K562 (cell line): ENCODE measurements at regions of chr15 and their contacts with region 1.

Region 1: DNA sequence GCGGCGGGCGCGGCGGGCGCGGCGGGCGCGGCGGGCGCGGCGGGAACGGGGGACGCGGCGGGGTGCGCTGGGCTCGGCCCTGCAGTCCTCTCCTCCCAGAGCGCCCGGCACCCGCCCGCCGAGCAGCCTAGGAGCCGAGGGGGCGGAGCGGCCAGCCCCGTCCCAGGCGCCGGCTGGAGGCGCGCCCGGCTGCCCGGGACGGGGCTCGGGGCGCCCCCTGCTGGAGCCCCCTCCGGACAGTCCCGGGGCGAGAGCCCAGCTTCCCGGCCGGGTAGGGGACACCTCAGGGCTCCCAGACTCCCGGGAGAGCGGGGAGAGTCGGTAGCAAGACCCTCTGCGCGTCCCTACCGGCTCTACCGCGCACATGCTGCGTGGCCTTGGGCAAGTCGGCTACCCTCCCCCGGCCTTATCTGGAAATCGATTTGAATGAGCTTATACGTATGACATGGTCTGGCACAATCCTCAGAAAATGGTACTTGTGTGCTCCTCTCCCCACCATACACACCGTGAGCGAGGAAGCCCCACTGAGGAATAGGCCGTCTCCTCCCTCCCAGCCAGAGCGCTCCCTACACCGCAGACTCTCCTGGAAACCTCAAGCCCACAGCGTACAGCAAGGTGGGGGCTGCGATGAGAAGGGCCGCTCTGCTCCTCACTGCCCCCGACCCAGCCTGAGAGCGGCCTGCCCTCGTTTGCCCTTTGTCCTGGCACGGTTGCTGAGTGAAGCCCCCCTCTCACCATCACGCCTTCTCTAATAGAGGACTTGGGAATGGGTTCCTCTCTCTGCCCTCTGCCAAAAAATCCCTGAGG is at the start of gene DAPK2:
- DNase-seq: peak; percentile 80 to 96 (median 95)
- ATAC-seq: peak; percentile 98
- H3K4me3 ChIP-seq: peak within 1 kb of the TSS; percentile 43
- H3K27ac ChIP-seq: peak within 1 kb of the TSS; percentile 51; the same call in 1 of the 3 replicates
- H3K4me1 ChIP-seq: peaks cover 4 to 28% of the 10 kb centered on the region in 2 experiments; a peak in 3 of 5 replicates
- H3K27me3 ChIP-seq: no peaks in the 10 kb centered on the region
- CTCF ChIP-seq: peak; percentile 76 to 91 (median 84)
- EP300 ChIP-seq: no peak
- POLR2A ChIP-seq: no peak
- RAD21 ChIP-seq: peak; percentile 89 to 90
- polyA plus RNA-seq, gene DAPK2: 0.14 to 0.20 TPM

Region 2: DNA sequence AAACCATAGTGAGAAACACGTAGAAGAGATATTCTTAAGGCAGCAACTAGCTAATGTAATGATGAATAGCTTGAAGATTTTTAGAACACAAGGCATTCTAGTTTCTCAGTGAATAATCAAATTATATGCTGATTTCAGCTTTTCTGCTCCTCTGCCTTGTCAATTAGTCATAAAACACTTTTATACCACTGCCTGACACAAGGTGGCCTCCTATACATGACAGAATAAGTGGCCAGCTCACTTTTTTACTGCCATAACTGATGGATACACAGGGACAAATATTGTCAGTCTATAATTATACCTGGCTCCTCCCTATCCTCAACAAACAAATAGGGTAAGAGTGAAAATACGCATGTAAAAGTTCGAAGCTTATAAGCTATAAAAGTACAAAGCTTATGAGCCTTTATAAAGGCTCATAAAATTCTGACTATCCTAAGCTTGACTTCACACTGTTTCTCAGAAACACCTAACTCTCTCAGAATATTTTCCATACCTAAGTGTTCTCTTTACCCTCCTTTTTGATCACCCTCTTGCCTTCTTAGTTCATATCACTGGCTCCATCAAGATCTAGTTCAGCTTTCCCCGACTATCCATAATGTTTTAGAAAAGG is 294.4 kb before region 1 on chr15:
- CTCF ChIA-PET with region 1: interaction called, 9 read pairs
- POLR2A ChIA-PET with region 1: no interaction called
- in situ Hi-C with region 1: loop called (anchors 5 kb)
- intact Hi-C with region 1: loop called (anchors 5 kb)
- DNase-seq: peak; percentile 33 to 72 (median 45)
- ATAC-seq: peak; percentile 92
- H3K4me3 ChIP-seq: no peak overlapping the region
- H3K27ac ChIP-seq: no peak overlapping the region
- H3K4me1 ChIP-seq: no peaks in the 10 kb centered on the region
- H3K27me3 ChIP-seq: no peaks in the 10 kb centered on the region
- CTCF ChIP-seq: peak; percentile 67 to 80 (median 72)
- EP300 ChIP-seq: no peak
- POLR2A ChIP-seq: no peak
- RAD21 ChIP-seq: peak; percentile 77 to 90

Region 3: GRCh38 chr15:63826528-63826927 is 220.0 kb before region 1 on chr15:
- CTCF ChIA-PET with region 1: interaction called, 5 read pairs
- POLR2A ChIA-PET with region 1: no interaction called
- in situ Hi-C with region 1: loop called (anchors 5 kb)
- intact Hi-C with region 1: loop called (anchors 2 kb)
- DNase-seq: peak in 1 of 4 experiments; percentile 66
- ATAC-seq: peak; percentile 51; the same call in 1 of the 3 replicates
- H3K4me3 ChIP-seq: no peak overlapping the region
- H3K27ac ChIP-seq: peak overlapping the region; percentile 53; the same call in 1 of the 3 replicates
- H3K4me1 ChIP-seq: peaks cover 16 to 23% of the 10 kb centered on the region in 2 experiments
- H3K27me3 ChIP-seq: no peaks in the 10 kb centered on the region
- CTCF ChIP-seq: peak; percentile 17 to 53 (median 25); a peak in 3 of 6 replicates
- EP300 ChIP-seq: no peak
- POLR2A ChIP-seq: no peak
- RAD21 ChIP-seq: peak; percentile 41 to 47

Region 4: GRCh38 chr15:63945007-63945788 is 101.4 kb before region 1 on chr15:
- CTCF ChIA-PET with region 1: interaction called, 6 read pairs
- POLR2A ChIA-PET with region 1: interaction called, 3 read pairs
- in situ Hi-C with region 1: loop called (anchors 5 kb)
- intact Hi-C with region 1: loop called (anchors 1 kb)
- DNase-seq: peak; percentile 82 to 87 (median 84)
- ATAC-seq: peak; percentile 97
- H3K4me3 ChIP-seq: no peak overlapping the region
- H3K27ac ChIP-seq: no peak overlapping the region
- H3K4me1 ChIP-seq: peaks cover 4 to 8% of the 10 kb centered on the region in 2 experiments; a peak in 3 of 5 replicates
- H3K27me3 ChIP-seq: no peaks in the 10 kb centered on the region
- CTCF ChIP-seq: peak; percentile 86 to 96 (median 94)
- EP300 ChIP-seq: 0 out of 2 replicates have a peak, but pooled peaks have one; percentile 12
- POLR2A ChIP-seq: no peak
- RAD21 ChIP-seq: peak; percentile 62 to 64

Region 5: GRCh38 chr15:63978511-63979261 is 67.9 kb before region 1 on chr15:
- CTCF ChIA-PET with region 1: no interaction called
- POLR2A ChIA-PET with region 1: no interaction called
- in situ Hi-C with region 1: no loop called
- intact Hi-C with region 1: no loop called
- DNase-seq: no peak
- ATAC-seq: no peak
- H3K4me3 ChIP-seq: no peak overlapping the region
- H3K27ac ChIP-seq: no peak overlapping the region
- H3K4me1 ChIP-seq: peaks cover 0 to 8% of the 10 kb centered on the region in 2 experiments; a peak in 1 of 5 replicates
- H3K27me3 ChIP-seq: no peaks in the 10 kb centered on the region
- CTCF ChIP-seq: no peak
- EP300 ChIP-seq: no peak
- POLR2A ChIP-seq: no peak
- RAD21 ChIP-seq: no peak

Region 6: GRCh38 chr15:64004582-64004981 is 42.0 kb before region 1 on chr15:
- CTCF ChIA-PET with region 1: no interaction called
- POLR2A ChIA-PET with region 1: no interaction called
- in situ Hi-C with region 1: no loop called
- intact Hi-C with region 1: loop called (anchors 2 kb)
- DNase-seq: peak; percentile 46 to 66 (median 59)
- ATAC-seq: peak; percentile 89
- H3K4me3 ChIP-seq: no peak overlapping the region
- H3K27ac ChIP-seq: no peak overlapping the region
- H3K4me1 ChIP-seq: peaks cover 3 to 17% of the 10 kb centered on the region in 2 experiments; a peak in 4 of 5 replicates
- H3K27me3 ChIP-seq: no peaks in the 10 kb centered on the region
- CTCF ChIP-seq: no peak
- EP300 ChIP-seq: peak; percentile 34; the same call in 1 of the 2 replicates
- POLR2A ChIP-seq: no peak
- RAD21 ChIP-seq: no peak

Region 7: GRCh38 chr15:64082757-64083156 is 36.2 kb after region 1 on chr15:
- CTCF ChIA-PET with region 1: no interaction called
- POLR2A ChIA-PET with region 1: no interaction called
- in situ Hi-C with region 1: no loop called
- intact Hi-C with region 1: no loop called
- DNase-seq: no peak
- ATAC-seq: no peak
- H3K4me3 ChIP-seq: no peak overlapping the region
- H3K27ac ChIP-seq: no peak overlapping the region
- H3K4me1 ChIP-seq: no peaks in the 10 kb centered on the region; a peak in 2 of 5 replicates
- H3K27me3 ChIP-seq: no peaks in the 10 kb centered on the region
- CTCF ChIP-seq: no peak
- EP300 ChIP-seq: no peak
- POLR2A ChIP-seq: no peak
- RAD21 ChIP-seq: no peak